Panc1 (cell line): ENCODE measurements at regions of chr16 and their contacts with region 1.

Region 1: DNA sequence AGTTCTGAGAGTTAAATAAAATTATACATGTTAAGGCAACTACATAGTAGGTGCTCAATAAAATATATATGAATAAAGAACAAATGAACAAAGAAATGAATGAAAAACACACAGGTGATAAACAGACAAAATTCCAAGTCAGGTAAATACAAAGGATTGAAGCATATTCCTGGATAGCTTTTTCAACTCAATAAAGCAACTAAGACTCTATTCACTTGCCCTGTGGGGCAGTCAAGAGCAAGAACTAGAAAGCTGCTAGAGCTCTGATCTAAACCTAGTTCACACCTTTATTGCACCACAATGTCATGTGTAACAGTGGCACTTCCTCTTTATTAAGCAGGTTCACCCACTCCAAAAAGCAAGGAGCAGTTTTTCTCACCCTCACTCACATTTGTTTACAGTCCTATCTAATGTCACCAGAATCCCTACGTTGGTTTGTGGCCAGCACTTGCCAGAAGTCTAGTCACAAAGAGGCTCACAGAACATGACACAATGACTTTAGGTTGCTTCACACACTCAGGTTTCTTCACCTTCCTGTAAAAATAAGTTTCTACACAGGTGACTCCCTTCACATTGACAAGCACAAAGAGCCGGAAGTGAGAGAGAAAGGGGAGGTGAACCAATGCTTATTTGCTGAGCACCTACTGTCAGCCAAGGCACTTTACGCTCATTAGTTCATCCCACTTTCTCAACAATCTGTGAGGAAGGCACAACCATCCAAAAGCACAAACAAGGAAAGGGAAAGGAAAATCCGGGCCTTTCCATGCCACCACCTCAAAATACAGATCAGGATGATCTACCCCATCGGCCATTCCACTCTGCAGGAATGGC is 70.8 kb downstream of the XPO6 start:
- DNase-seq: no peak
- ATAC-seq: no peak
- H3K4me3 ChIP-seq: no peak overlapping the region
- H3K27ac ChIP-seq: no peak overlapping the region
- H3K4me1 ChIP-seq: no peaks in the 10 kb centered on the region
- H3K27me3 ChIP-seq: no peaks in the 10 kb centered on the region
- CTCF ChIP-seq: no peak

Region 2: DNA sequence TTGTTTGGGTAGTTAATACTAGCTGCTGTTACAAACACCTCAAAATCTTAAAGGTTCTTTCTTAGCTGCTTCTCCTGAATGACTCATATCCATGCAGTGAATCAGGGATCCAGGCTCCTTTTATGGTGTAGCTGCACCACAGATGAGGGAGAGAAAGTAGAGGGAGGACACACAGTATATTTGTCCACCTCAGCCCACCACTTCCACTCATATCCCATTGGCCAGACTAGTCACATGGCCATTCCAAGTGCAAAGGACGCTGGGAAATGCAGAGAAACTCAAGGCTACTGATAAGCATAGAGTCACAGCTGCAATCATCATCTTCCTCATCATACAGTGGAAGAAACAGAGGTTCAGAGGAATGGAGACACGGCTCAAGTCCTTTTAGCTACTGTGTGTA is 141.3 kb before region 1 on chr16:
- CTCF ChIA-PET with region 1: interaction called, 13 read pairs
- POLR2A ChIA-PET with region 1: no interaction called
- in situ Hi-C with region 1: no loop called
- intact Hi-C with region 1: no loop called
- DNase-seq: no peak
- ATAC-seq: no peak
- H3K4me3 ChIP-seq: no peak overlapping the region
- H3K27ac ChIP-seq: no peak overlapping the region
- H3K4me1 ChIP-seq: no peaks in the 10 kb centered on the region
- H3K27me3 ChIP-seq: no peaks in the 10 kb centered on the region
- CTCF ChIP-seq: no peak

Region 3: DNA sequence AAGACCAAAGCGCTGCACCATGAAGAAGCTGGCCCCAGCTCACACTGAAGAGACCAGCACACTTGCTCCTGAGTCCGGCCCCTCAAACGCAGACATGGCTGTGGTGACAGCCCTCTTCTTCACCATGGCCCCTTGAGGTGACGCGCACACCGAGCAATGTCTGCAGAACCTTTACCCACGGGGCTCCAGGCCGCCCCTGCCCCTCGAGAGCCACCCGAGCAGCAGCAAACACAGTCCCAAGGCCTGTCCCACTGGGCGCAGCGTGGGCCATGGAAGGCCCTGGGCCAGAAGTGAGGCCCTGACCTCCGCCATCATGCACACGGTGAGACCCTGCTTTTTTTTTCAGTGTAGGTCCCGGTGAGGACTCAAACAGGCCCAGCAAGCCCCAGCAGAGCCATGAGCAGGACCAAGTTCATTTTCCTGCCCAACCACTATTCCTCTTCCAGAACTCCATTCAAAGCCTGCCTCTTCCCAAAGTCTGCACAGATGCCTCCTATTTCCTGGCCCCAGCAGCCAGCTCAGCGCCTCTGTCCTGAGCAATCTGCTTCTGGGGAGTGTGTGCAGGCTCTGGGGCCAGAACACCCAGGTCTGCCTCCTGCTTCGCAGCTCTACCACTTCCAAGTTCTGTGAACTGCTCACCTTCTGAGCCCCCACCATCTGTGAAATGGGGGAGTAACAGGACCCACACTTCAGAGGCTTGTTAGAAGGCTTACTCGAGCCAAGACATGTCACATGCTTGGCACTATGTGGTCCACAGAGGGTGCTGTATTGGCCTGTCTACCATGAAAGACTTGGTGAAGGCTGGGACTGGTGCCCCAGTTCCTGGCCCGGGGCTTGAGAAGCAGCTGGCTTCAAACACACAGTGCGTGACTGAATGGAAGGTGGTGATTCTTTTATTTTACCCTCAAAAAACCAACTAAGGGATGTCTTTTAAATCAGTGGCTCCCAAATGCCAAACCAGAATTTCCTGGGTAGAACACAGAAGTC is 41.8 kb before region 1 on chr16:
- CTCF ChIA-PET with region 1: no interaction called
- POLR2A ChIA-PET with region 1: no interaction called
- in situ Hi-C with region 1: no loop called
- intact Hi-C with region 1: no loop called
- DNase-seq: no peak
- ATAC-seq: no peak
- H3K4me3 ChIP-seq: no peak overlapping the region
- H3K27ac ChIP-seq: no peak overlapping the region
- H3K4me1 ChIP-seq: no peaks in the 10 kb centered on the region
- H3K27me3 ChIP-seq: no peaks in the 10 kb centered on the region
- CTCF ChIP-seq: no peak

Region 4: DNA sequence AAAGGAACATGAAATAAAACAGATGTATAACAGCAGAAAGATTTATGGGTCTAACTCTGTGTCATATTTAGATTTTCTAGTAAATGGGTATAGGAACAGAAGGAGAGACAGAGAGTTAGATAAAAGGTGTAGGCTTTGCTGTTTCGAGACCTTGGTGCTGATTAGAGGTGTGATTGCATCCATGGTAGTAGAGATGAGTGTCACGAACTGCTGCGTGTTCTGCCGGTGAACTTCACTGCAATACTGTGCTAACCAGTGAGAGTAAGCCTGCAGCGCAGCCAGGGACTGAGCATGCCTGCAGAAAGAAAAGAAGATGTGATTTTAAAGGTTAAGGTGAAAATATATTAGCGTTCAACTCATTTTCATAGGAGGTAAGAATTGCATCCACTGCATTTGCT is 23.8 kb before region 1 on chr16:
- CTCF ChIA-PET with region 1: no interaction called
- POLR2A ChIA-PET with region 1: no interaction called
- in situ Hi-C with region 1: no loop called
- intact Hi-C with region 1: no loop called
- DNase-seq: no peak
- ATAC-seq: no peak
- H3K4me3 ChIP-seq: no peak overlapping the region
- H3K27ac ChIP-seq: no peak overlapping the region
- H3K4me1 ChIP-seq: no peaks in the 10 kb centered on the region
- H3K27me3 ChIP-seq: no peaks in the 10 kb centered on the region
- CTCF ChIP-seq: no peak